Activated B cell treated with CpG ODN at 0.5 μM for 24 hours (primary cell): ENCODE measurements at regions of chr7 and their contacts with region 1.

Region 1: DNA sequence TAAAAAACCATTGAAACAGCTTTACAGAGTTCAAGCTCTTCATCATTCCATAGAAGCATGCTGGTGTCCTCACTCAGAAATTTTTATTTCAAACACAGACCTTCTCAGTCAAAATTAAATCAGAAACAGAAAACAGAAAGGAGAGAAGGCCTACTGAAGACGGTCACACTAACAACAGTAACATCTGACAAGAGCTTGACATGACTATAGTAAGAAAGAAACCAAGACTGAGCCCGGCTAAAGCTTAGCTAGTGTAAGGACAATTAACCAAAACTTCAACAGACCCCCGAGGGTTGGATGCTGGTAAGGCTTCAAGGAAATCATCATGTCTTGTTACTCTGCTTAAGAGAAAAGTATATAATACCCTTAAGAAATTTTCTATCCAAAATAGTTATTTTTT is 38.6 kb downstream of the MTPN start:
- DNase-seq: no peak
- ATAC-seq: no peak
- H3K4me3 Mint-ChIP-seq: no peak overlapping the region
- H3K27ac Mint-ChIP-seq: peak overlapping the region; percentile 59
- H3K4me1 Mint-ChIP-seq: peaks cover 83% of the 10 kb centered on the region
- H3K27me3 Mint-ChIP-seq: no peaks in the 10 kb centered on the region
- CTCF ChIP-seq: no peak

Region 2: DNA sequence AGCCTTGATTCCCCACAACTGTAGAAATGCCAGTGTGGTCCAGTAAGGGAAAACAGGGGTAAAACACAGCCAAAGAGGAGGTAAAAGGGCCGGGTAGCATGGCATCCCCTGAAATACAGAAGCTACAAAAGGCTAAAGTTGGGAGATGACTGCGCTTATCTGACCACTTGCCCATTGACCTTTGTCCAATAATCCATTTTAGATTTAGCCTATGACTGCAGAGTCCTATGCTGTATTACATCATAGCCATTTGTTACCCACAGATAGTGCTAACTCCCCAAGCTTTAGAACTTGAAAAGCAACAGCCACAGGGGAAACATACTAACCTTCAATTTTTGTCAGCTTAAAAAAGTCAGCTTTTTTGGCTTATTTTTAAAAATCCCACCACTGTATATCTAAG is 12.4 kb after region 1 on chr7:
- CTCF ChIA-PET with region 1: no interaction called
- POLR2A ChIA-PET with region 1: no interaction called
- intact Hi-C with region 1: loop called (anchors 2 kb)
- DNase-seq: no peak
- ATAC-seq: no peak
- H3K4me3 Mint-ChIP-seq: no peak overlapping the region
- H3K27ac Mint-ChIP-seq: no peak overlapping the region
- H3K4me1 Mint-ChIP-seq: peaks cover 75% of the 10 kb centered on the region
- H3K27me3 Mint-ChIP-seq: no peaks in the 10 kb centered on the region
- CTCF ChIP-seq: no peak

Region 3: DNA sequence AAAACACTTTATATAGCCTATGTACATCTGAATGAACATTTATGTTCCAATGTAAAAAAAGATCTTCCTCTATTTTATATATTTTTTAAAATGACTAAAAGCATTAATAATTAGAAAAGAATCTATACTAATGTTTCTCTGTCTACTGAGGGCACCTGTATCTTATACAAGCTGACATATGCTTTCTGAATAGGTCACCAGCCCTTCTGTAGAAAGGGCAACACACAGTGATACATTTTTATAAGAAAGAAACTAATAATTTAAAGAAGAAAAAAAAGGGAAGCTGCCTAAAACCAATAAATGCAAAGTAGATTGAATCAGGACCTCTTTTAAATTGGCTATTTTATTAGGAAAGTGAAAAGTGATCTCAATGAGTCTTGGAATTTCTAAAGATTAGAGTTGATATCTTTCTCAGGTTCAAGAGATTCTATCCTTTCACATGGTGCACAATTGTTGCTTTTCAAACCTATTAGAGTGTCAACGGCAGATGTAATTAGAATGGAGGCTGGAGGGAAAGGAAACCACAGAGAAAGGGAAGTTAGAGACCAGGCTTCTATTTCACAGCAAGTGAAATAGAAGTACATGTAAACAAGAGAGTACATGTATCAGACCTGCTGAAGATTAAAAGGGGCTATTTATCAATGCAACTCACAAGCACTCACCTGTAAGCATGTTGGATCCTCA is 32.3 kb after region 1 on chr7:
- CTCF ChIA-PET with region 1: no interaction called
- POLR2A ChIA-PET with region 1: no interaction called
- intact Hi-C with region 1: loop called (anchors 5 kb)
- DNase-seq: no peak
- ATAC-seq: peak; percentile 79
- H3K4me3 Mint-ChIP-seq: peak overlapping the region; percentile 22
- H3K27ac Mint-ChIP-seq: peak overlapping the region; percentile 64
- H3K4me1 Mint-ChIP-seq: peaks cover 91% of the 10 kb centered on the region
- H3K27me3 Mint-ChIP-seq: no peaks in the 10 kb centered on the region
- CTCF ChIP-seq: no peak